ENCODE measurements at regions of chr17 and their contacts with region 1.

Region 1: DNA sequence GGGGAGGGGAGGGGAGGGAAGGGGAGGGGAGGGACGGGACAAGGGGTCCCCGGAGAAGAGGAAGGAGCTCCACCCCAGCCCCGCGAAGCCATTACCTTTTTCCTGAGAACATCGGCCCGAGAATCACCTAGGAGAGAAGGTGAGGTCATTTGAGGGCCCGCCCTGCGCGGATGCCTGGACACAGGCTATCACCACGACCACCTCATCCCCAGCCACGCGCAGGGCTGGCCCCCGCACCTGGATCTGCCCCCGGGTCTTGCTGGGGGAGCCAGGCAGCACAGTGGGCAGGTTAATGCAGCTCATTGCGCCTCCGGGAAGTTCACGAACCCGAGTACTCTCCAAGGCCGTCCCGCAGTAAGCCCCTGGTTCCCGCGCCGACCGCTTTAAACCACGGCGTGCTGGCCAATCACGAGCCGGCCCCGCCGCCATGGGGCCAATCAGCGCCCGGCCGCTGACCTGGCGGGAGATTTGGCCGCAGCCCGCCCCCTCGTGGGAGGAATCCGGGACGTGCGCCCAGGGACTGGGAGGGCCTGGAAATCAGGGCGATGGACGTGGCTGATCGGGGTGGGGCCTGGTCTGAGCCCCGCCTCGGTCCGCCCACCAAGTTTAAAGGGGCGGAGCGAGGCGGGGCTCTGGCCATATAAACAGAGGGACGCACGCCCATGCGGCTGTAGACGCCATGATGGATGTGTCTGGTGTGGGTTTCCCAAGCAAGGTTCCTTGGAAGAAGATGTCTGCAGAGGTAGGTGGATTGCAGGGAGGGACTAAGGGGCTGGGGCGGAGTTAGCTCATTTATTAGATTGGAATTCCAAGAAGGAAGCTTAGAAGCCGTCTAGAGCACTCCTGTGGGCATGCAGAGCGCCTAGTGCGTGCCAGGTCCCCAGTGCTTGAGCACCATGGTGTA is at the starts of genes AFMID and TK1:
- DNase-seq: peak; percentile 95 to 100
- H3K4me3 ChIP-seq: peak within 1 kb of the TSS; percentile 71 to 85 (median 80)
- H3K27ac ChIP-seq: peak within 1 kb of the TSS; percentile 94
- H3K4me1 ChIP-seq: peaks cover 0 to 13% (median 5%) of the 10 kb centered on the region in 4 experiments; a peak in 6 of 7 replicates
- H3K27me3 ChIP-seq: no peaks in the 10 kb centered on the region; a peak in 1 of 7 replicates
- CTCF ChIP-seq: peak; percentile 72 to 82 (median 80)
- EP300 ChIP-seq: no peak
- POLR2A ChIP-seq: peak; percentile 98
- RAD21 ChIP-seq: peak; percentile 2 to 27; a peak in 1 of 4 replicates
- total RNA-seq, gene AFMID: 53.0 and 54.8 TPM in 2 replicates
- total RNA-seq, gene TK1: 66.9 and 76.5 TPM in 2 replicates

Region 2: DNA sequence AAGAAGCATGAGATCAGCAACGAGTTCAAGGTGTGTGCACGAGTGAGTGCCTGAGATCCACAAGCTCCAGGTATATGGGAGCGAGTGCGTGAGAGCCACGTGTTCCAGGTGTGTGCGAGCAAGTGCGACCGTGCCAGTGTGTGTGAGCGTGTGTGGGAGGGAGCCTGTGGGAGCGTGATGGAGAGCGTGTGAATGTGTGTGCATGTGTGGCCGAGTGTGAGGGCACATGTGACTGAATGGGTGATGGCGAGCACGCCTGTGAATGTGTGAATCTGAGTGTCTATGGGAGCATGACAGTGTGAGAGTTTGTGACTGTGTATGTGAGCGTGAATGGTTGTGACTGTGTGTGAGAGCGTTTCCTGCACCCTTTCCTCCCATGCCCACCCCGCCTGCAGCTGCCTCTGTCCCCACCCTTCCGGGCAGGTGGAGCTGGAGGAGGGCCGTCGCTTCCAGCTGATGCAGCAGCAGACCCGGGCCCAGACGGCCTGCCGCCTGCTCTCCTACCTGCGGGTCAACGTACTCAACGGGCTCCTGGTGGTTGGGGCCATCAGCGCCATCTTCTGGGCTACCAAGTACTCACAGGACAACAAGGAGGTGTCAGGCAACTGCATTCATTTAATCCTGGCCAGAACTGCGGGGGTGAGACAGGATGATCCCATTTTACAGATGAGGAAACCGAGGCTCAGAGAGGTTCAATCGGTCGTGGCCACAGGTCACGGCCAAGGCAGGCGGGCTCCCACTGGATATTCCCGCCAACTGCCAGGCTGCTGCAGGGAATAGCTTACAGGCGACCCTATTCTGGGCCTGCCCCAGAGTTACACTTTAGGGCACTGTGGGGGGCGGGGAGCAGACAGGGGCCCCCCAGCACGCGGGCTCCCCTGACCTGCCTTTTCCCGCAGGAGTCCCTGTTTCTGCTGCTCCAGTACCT is 52.7 kb before region 1 on chr17:
- CTCF ChIA-PET with region 1: interaction called, 11 read pairs
- POLR2A ChIA-PET with region 1: interaction called, 8 read pairs
- DNase-seq: peak; percentile 72 to 87
- H3K4me3 ChIP-seq: no peak overlapping the region; a peak in 1 of 8 replicates
- H3K27ac ChIP-seq: no peak overlapping the region
- H3K4me1 ChIP-seq: peaks cover 0 to 22% (median 7%) of the 10 kb centered on the region in 4 experiments; a peak in 5 of 7 replicates
- H3K27me3 ChIP-seq: peaks cover 0 to 26% (median 17%) of the 10 kb centered on the region in 4 experiments; a peak in 5 of 7 replicates
- CTCF ChIP-seq: peak; percentile 87 to 95 (median 90)
- EP300 ChIP-seq: no peak
- POLR2A ChIP-seq: no peak
- RAD21 ChIP-seq: peak; percentile 65 to 82

Region 3: DNA sequence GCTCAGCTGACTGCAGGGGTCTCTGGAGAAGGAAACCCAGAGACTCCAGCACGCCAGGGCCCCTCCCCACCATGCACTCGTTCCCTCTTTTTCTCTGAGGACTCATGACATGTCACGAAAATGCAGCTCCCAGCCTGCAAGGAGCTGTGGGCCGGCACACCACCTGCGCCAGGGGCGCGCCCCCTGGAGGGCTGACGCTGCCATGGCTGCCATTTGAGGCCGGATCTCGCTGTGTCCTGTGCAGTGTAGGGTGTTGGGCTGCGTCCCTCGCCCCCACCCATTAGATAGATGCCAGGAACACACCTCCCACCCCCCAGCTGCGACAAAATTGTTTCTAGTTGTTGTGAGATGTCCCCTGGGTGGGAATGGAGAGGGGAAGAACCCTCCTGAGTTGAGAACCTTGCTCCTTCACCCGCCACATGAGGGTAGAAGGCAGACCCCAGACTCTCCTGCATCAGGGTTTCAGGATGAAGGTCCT is 10.4 kb before region 1 on chr17:
- CTCF ChIA-PET with region 1: interaction called, 76 read pairs
- POLR2A ChIA-PET with region 1: interaction called, 131 read pairs
- DNase-seq: peak in 1 of 2 experiments; percentile 92
- H3K4me3 ChIP-seq: no peak overlapping the region
- H3K27ac ChIP-seq: no peak overlapping the region
- H3K4me1 ChIP-seq: peaks cover 5 to 17% (median 7%) of the 10 kb centered on the region in 4 experiments
- H3K27me3 ChIP-seq: no peaks in the 10 kb centered on the region
- CTCF ChIP-seq: peak; percentile 89 to 99 (median 94)
- EP300 ChIP-seq: no peak
- POLR2A ChIP-seq: peak in 1 of 2 experiments; percentile 49; a peak in 1 of 3 replicates
- RAD21 ChIP-seq: peak; percentile 48 to 70

Region 4: DNA sequence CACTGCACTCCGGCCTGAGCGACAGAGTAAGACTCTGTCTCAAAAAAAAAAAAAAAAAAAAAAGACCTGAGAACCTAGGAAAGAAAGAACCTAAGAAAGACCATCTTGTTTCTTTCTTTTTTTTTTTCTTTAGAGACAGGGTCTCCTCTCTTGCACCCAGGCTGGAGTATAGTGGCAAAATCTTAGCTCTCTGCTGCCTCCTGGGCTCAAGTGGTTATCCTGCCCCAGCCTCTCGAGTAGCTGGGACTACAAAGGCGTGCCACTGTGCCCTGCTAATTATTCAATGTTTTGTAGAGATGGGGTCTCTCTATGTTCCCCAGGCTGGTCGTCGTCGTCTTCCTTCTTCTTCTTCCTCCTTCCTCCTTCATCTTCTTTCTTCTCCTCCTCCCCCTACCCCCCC is 19.4 kb after region 1 on chr17:
- CTCF ChIA-PET with region 1: interaction called, 65 read pairs
- POLR2A ChIA-PET with region 1: interaction called, 36 read pairs
- DNase-seq: no peak
- H3K4me3 ChIP-seq: no peak overlapping the region
- H3K27ac ChIP-seq: no peak overlapping the region
- H3K4me1 ChIP-seq: no peaks in the 10 kb centered on the region
- H3K27me3 ChIP-seq: no peaks in the 10 kb centered on the region
- CTCF ChIP-seq: peak; percentile 34 to 43 (median 34); a peak in 3 of 4 replicates
- EP300 ChIP-seq: no peak
- POLR2A ChIP-seq: no peak
- RAD21 ChIP-seq: peak; percentile 22 to 54; a peak in 3 of 4 replicates

Region 5: GRCh38 chr17:78226749-78227399 is 39.9 kb after region 1 on chr17:
- CTCF ChIA-PET with region 1: interaction called, 3 read pairs
- POLR2A ChIA-PET with region 1: interaction called, 15 read pairs
- DNase-seq: no peak
- H3K4me3 ChIP-seq: no peak overlapping the region
- H3K27ac ChIP-seq: no peak overlapping the region
- H3K4me1 ChIP-seq: peaks cover 0 to 6% (median 5%) of the 10 kb centered on the region in 4 experiments; a peak in 5 of 7 replicates
- H3K27me3 ChIP-seq: peaks cover 0 to 14% (median 12%) of the 10 kb centered on the region in 4 experiments; a peak in 6 of 7 replicates
- CTCF ChIP-seq: no peak
- EP300 ChIP-seq: no peak
- POLR2A ChIP-seq: no peak
- RAD21 ChIP-seq: no peak